OCI-LY7 (cell line): ENCODE measurements at regions of chr3 and their contacts with region 1.

Region 1: DNA sequence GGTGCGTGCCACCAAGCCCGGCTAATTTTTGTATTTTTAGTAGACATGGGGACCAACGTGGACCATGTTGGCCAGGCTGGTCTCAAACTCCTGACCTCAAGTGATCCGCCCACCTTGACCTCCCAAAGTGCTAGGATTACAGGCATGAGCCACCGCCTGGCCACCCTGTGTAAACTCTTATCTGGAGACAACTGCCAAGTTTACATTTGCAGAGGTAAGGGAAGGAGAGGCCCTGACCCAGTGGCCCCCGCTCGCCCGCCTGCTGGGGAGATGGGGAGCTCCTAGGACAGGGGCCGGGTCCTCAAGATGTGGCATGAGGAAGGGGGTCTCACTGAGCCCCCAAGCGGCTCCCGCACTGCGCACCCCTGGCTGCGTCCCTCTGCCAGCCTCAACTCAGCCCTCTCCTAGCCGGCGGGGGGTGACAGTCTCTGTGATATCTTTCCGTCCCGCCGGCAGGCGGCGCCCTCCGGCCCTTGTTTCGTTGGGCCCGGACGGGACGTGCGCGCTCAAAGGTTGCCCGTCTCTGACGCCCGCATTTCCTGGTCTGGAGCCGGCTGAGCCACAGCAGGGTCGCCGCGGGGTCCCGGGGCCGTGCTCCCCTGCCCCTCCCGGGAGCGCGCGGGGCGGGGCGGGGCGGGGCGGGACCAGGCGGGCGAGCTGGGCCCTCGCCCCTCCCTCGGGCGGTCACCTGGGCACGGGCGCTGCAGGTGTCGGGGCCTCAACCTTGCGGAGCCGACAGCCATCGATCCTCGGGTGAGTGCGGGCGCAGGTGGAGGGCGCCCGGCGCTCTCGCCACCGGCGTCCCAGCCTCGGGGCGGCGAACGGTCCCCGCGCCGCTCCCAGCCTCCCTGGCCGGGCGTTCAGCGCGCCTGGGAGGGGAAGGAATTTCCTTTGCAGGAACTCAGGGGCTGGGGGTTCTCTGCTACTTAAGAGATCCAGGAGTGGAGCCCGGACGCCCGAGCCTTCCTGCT is at the start of gene GPR160:
- DNase-seq: peak; percentile 95
- H3K4me3 ChIP-seq: peak within 1 kb of the TSS; percentile 94
- H3K27ac ChIP-seq: peak within 1 kb of the TSS; percentile 64
- H3K4me1 ChIP-seq: peaks cover 40% of the 10 kb centered on the region
- CTCF ChIP-seq: peak; percentile 81
- total RNA-seq, gene GPR160: 90.5 and 108 TPM in 2 replicates

Region 2: GRCh38 chr3:169863458-169863899 is 174.3 kb before region 1 on chr3:
- CTCF ChIA-PET with region 1: no interaction called
- POLR2A ChIA-PET with region 1: interaction called, 5 read pairs
- intact Hi-C with region 1: loop called (anchors 1 kb)
- DNase-seq: peak; percentile 85
- H3K4me3 ChIP-seq: no peak overlapping the region
- H3K27ac ChIP-seq: no peak overlapping the region
- H3K4me1 ChIP-seq: peaks cover 33% of the 10 kb centered on the region
- CTCF ChIP-seq: peak; percentile 99

Region 3: GRCh38 chr3:169931747-169932520 is 105.8 kb before region 1 on chr3:
- CTCF ChIA-PET with region 1: no interaction called
- POLR2A ChIA-PET with region 1: interaction called, 5 read pairs
- intact Hi-C with region 1: loop called (anchors 1 kb)
- DNase-seq: peak; percentile 94
- H3K4me3 ChIP-seq: peak overlapping the region; percentile 56
- H3K27ac ChIP-seq: peak overlapping the region; percentile 86
- H3K4me1 ChIP-seq: peaks cover 81% of the 10 kb centered on the region
- CTCF ChIP-seq: no peak

Region 4: GRCh38 chr3:170171563-170171962 is 133.8 kb after region 1 on chr3:
- CTCF ChIA-PET with region 1: no interaction called
- POLR2A ChIA-PET with region 1: interaction called, 3 read pairs
- intact Hi-C with region 1: loop called (anchors 5 kb)
- DNase-seq: no peak
- H3K4me3 ChIP-seq: peak overlapping the region; percentile 10
- H3K27ac ChIP-seq: peak overlapping the region; percentile 45
- H3K4me1 ChIP-seq: peaks cover 40% of the 10 kb centered on the region
- CTCF ChIP-seq: no peak